ENCODE measurements at regions of chr1 and their contacts with region 1.

Region 1: DNA sequence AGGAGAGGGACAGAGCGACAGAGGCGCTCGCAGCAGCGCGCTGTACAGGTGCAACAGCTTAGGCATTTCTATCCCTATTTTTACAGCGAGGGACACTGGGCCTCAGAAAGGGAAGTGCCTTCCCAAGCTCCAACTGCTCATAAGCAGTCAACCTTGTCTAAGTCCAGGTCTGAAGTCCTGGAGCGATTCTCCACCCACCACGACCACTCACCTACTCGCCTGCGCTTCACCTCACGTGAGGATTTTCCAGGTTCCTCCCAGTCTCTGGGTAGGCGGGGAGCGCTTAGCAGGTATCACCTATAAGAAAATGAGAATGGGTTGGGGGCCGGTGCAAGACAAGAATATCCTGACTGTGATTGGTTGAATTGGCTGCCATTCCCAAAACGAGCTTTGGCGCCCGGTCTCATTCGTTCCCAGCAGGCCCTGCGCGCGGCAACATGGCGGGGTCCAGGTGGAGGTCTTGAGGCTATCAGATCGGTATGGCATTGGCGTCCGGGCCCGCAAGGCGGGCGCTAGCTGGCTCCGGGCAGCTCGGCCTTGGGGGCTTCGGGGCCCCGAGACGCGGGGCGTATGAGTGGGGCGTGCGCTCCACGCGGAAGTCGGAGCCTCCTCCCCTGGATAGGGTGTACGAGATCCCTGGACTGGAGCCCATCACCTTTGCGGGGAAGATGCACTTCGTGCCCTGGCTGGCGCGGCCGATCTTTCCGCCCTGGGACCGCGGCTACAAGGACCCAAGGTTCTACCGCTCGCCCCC is at the starts of genes CYB5RL and MRPL37:
- DNase-seq: peak; percentile 99 to 100 (median 100)
- ATAC-seq: peak; percentile 96
- H3K4me3 ChIP-seq: peak within 1 kb of the TSS; percentile 85
- H3K27ac ChIP-seq: peak within 1 kb of the TSS; percentile 83
- H3K4me1 ChIP-seq: peaks cover 20 to 24% of the 10 kb centered on the region in 2 experiments; a peak in 4 of 5 replicates
- H3K27me3 ChIP-seq: no peaks in the 10 kb centered on the region
- CTCF ChIP-seq: peak in 1 of 3 experiments; percentile 15; a peak in 1 of 6 replicates
- EP300 ChIP-seq: no peak; the same call in 1 of the 2 replicates
- POLR2A ChIP-seq: peak; percentile 95
- RAD21 ChIP-seq: 0 out of 4 replicates have a peak, but pooled peaks of 1 of the 2 experiments have one; percentile 10
- polyA plus RNA-seq, gene CYB5RL: 8.8 to 8.9 TPM
- polyA plus RNA-seq, gene MRPL37: 52.2 to 79.7 TPM

Region 2: DNA sequence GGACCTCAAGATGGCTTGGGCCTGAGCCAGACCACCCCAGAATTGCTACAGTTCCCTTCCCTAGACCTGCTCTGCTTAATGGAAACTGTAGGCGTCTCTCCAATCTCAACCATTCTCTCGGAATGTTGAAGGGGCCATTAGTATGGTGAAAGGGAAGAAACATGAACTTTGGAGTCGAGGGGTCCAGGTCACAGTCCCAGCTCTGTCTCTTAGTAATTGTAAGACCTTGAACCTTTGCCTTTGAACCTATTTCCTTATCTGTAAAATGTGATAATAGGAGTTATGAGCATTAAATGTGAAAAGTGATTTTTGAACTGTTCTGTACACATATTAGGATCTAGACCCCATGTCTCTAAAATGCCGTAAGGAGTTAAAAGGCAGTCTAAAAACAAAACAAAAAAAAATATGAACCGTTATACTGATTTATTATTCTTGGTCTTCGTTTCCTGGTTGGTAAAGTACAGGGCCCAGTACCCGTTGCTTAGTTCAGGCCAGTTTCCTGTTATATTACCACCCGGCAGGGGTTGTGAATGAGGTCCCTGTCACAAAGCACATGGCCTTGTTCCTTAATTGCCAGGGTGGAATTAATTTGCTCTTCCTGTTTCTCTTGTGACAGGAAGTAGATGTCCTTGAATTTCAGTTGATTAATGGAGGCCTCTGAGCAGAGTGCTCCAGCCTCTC is 104.3 kb before region 1 on chr1:
- CTCF ChIA-PET with region 1: no interaction called
- POLR2A ChIA-PET with region 1: no interaction called
- in situ Hi-C with region 1: no loop called
- intact Hi-C with region 1: no loop called
- DNase-seq: no peak
- ATAC-seq: no peak
- H3K4me3 ChIP-seq: no peak overlapping the region
- H3K27ac ChIP-seq: no peak overlapping the region
- H3K4me1 ChIP-seq: 0 out of 5 replicates have a peak, but pooled peaks cover 0 to 4% of the 10 kb centered on the region in 2 experiments
- H3K27me3 ChIP-seq: no peaks in the 10 kb centered on the region
- CTCF ChIP-seq: no peak
- EP300 ChIP-seq: no peak
- POLR2A ChIP-seq: no peak
- RAD21 ChIP-seq: no peak

Region 3: GRCh38 chr1:54153548-54154439 is 46.1 kb before region 1 on chr1:
- CTCF ChIA-PET with region 1: no interaction called
- POLR2A ChIA-PET with region 1: no interaction called
- in situ Hi-C with region 1: no loop called
- intact Hi-C with region 1: no loop called
- DNase-seq: no peak
- ATAC-seq: peak; percentile 29
- H3K4me3 ChIP-seq: no peak overlapping the region
- H3K27ac ChIP-seq: no peak overlapping the region
- H3K4me1 ChIP-seq: peaks cover 0 to 7% of the 10 kb centered on the region in 2 experiments; a peak in 1 of 5 replicates
- H3K27me3 ChIP-seq: peaks cover 0 to 5% of the 10 kb centered on the region in 2 experiments; a peak in 1 of 5 replicates
- CTCF ChIP-seq: no peak
- EP300 ChIP-seq: no peak
- POLR2A ChIP-seq: no peak
- RAD21 ChIP-seq: no peak

Region 4: DNA sequence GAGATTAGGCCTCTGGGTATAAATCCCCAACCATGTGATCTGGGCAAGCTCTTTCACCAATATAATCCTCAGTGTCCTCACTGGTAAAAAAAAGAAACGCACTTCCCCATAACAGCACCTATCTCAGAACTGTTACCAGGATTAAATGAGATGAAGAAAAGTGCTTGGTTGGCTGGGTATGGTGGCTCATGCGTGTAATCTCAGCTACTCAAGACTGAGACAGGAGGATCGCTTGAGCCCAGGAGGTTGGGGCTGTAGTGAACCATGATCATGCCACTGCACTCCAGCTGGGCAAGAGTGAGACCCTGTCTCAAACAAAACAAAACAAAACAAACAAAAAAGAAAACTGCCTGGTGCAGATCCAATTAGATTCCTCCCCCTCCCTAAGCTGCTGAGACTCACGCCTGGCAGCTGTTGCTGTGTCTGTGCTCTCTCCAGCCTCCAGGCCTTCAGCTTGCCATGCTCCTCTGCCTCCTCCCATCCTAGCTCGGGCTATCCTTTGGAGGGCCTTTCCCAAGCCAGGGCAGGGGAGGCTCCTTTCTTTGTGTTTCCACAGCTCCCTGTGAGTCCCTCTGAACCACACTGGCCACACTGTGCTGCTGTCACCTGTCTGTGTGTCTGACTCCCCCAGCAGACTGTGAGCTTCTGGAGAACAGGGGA is 19.1 kb before region 1 on chr1:
- CTCF ChIA-PET with region 1: no interaction called
- POLR2A ChIA-PET with region 1: interaction called, 14 read pairs
- in situ Hi-C with region 1: no loop called
- intact Hi-C with region 1: no loop called
- DNase-seq: no peak
- ATAC-seq: no peak
- H3K4me3 ChIP-seq: no peak overlapping the region
- H3K27ac ChIP-seq: no peak overlapping the region
- H3K4me1 ChIP-seq: no peaks in the 10 kb centered on the region
- H3K27me3 ChIP-seq: no peaks in the 10 kb centered on the region
- CTCF ChIP-seq: no peak
- EP300 ChIP-seq: no peak
- POLR2A ChIP-seq: no peak
- RAD21 ChIP-seq: no peak

Region 5: GRCh38 chr1:54186056-54186455 is 13.9 kb before region 1 on chr1:
- CTCF ChIA-PET with region 1: no interaction called
- POLR2A ChIA-PET with region 1: interaction called, 14 read pairs
- in situ Hi-C with region 1: no loop called
- intact Hi-C with region 1: no loop called
- DNase-seq: no peak
- ATAC-seq: no peak
- H3K4me3 ChIP-seq: no peak overlapping the region
- H3K27ac ChIP-seq: no peak overlapping the region
- H3K4me1 ChIP-seq: no peaks in the 10 kb centered on the region
- H3K27me3 ChIP-seq: no peaks in the 10 kb centered on the region
- CTCF ChIP-seq: no peak
- EP300 ChIP-seq: no peak
- POLR2A ChIP-seq: no peak
- RAD21 ChIP-seq: no peak

Region 6: GRCh38 chr1:54220004-54220811 is 20.3 kb after region 1 on chr1:
- CTCF ChIA-PET with region 1: no interaction called
- POLR2A ChIA-PET with region 1: interaction called, 148 read pairs
- in situ Hi-C with region 1: no loop called
- intact Hi-C with region 1: no loop called
- DNase-seq: no peak
- ATAC-seq: peak; percentile 10; the same call in 2 of the 3 replicates
- H3K4me3 ChIP-seq: no peak overlapping the region
- H3K27ac ChIP-seq: no peak overlapping the region
- H3K4me1 ChIP-seq: peaks cover 4 to 23% of the 10 kb centered on the region in 2 experiments; a peak in 4 of 5 replicates
- H3K27me3 ChIP-seq: no peaks in the 10 kb centered on the region
- CTCF ChIP-seq: no peak
- EP300 ChIP-seq: no peak
- POLR2A ChIP-seq: peak; percentile 32; the same call in 1 of the 2 replicates
- RAD21 ChIP-seq: no peak

Measured in K562 (cell line).